ENCODE measurements at regions of chr11 and their contacts with region 1.

Region 1: GRCh38 chr11:35391922-35392813 is 27.2 kb downstream of the SLC1A2 start:
- DNase-seq: peak; percentile 86
- ATAC-seq: peak; percentile 89

Region 2: DNA sequence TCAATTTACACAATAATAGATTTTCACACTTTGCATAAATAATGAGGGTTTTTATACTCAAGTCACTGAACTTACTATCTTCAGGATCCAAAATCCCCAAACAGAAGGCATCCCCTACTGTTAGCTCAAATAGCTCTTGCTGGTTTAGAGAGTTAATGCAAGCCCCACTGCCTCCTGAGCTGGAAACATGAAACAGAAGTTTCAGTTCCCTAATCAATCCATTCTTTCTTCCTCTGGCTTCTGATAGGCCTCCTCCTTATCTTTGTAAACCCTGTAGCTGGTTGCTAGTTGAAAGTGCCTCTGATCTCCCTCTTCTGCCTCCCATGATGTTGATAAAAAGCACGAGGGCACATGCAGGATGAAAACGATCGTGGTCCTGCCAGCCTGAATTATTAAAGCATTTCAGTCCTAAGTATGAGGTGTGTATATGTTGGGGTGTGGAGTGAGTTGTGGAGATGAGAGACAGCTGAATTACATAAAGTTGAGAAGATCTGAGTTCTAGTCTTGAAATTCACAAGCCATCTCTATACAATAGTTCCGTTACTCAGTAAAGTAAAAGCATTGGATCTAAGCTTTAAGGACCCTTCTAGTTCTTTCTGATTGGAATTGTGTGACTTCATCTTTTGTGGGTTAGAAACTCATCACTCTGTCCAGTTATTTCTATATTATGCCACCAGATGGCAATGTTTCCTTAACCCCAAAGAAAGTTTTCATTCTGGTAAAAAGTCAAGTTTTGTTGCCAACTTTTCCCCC is 806.3 kb before region 1 on chr11:
- intact Hi-C with region 1: loop called (anchors 5 kb)
- DNase-seq: no peak
- ATAC-seq: peak; percentile 45

Region 3: GRCh38 chr11:34926101-34926830 is 465.9 kb before region 1 on chr11:
- intact Hi-C with region 1: loop called (anchors 5 kb)
- DNase-seq: no peak
- ATAC-seq: peak; percentile 72

Measured in left ventricle myocardium superior (tissue), 1 donor.